PC-9 (cell line): ENCODE measurements at regions of chr5 and their contacts with region 1.

Region 1: GRCh38 chr5:14190194-14191164 is 47.3 kb downstream of the TRIO start:
- DNase-seq: peak; percentile 87 to 98
- H3K4me3 ChIP-seq: peak overlapping the region; percentile 30; the same call in 1 of the 2 replicates
- H3K27ac ChIP-seq: peak overlapping the region; percentile 92
- H3K4me1 ChIP-seq: peaks cover 79% of the 10 kb centered on the region
- H3K27me3 ChIP-seq: no peaks in the 10 kb centered on the region
- CTCF ChIP-seq: no peak

Region 2: GRCh38 chr5:14108170-14108996 is 82.1 kb before region 1 on chr5:
- CTCF ChIA-PET with region 1: no interaction called
- POLR2A ChIA-PET with region 1: interaction called, 14 read pairs
- intact Hi-C with region 1: loop called (anchors 1 kb)
- DNase-seq: peak in 1 of 2 experiments; percentile 81
- H3K4me3 ChIP-seq: no peak overlapping the region
- H3K27ac ChIP-seq: peak overlapping the region; percentile 22; the same call in 1 of the 2 replicates
- H3K4me1 ChIP-seq: peaks cover 10% of the 10 kb centered on the region
- H3K27me3 ChIP-seq: no peaks in the 10 kb centered on the region
- CTCF ChIP-seq: peak; percentile 59

Region 3: GRCh38 chr5:14225173-14225834 is 34.8 kb after region 1 on chr5:
- CTCF ChIA-PET with region 1: no interaction called
- POLR2A ChIA-PET with region 1: interaction called, 14 read pairs
- intact Hi-C with region 1: loop called (anchors 2 kb)
- DNase-seq: peak in 1 of 2 experiments; percentile 43
- H3K4me3 ChIP-seq: no peak overlapping the region
- H3K27ac ChIP-seq: peak overlapping the region; percentile 33; the same call in 1 of the 2 replicates
- H3K4me1 ChIP-seq: peaks cover 24% of the 10 kb centered on the region
- H3K27me3 ChIP-seq: no peaks in the 10 kb centered on the region
- CTCF ChIP-seq: no peak

Region 4: GRCh38 chr5:14264604-14265316 is 74.3 kb after region 1 on chr5:
- CTCF ChIA-PET with region 1: interaction called, 8 read pairs
- POLR2A ChIA-PET with region 1: interaction called, 12 read pairs
- intact Hi-C with region 1: loop called (anchors 1 kb)
- DNase-seq: peak; percentile 90 to 99
- H3K4me3 ChIP-seq: peak overlapping the region; percentile 52
- H3K27ac ChIP-seq: peak overlapping the region; percentile 88
- H3K4me1 ChIP-seq: peaks cover 62% of the 10 kb centered on the region
- H3K27me3 ChIP-seq: no peaks in the 10 kb centered on the region
- CTCF ChIP-seq: no peak